Gastrocnemius medialis (tissue), 4 donors: ENCODE measurements at regions of chr6 and their contacts with region 1.

Region 1: DNA sequence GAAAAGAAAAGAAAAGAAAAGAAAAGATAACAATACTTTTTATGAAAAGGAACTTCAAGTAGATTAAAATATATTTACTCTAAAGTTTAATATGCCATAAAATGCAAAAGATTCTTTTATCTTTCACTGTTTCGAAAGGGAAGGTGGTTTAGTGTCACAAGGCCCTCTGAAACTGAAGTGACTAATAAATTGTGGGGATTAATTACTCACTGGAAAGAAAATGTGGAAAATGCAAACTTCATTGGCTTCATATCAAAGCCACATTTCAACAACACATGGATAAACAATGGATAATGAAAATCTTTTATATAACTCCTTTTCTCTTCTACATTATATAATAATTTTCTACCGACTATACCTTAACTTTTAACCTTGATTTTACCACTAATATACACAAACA is 320.5 kb upstream of the RSPO3 start:
- DNase-seq: no peak
- ATAC-seq: no peak
- H3K4me3 ChIP-seq: no peak overlapping the region
- H3K27ac ChIP-seq: no peak overlapping the region
- H3K4me1 ChIP-seq: no peaks in the 10 kb centered on the region
- H3K27me3 ChIP-seq: no peaks in the 10 kb centered on the region
- CTCF ChIP-seq: no peak
- POLR2A ChIP-seq: no peak

Region 2: GRCh38 chr6:126812651-126813050 is 14.7 kb after region 1 on chr6:
- in situ Hi-C with region 1: no loop called
- intact Hi-C with region 1: loop called (anchors 1 kb)
- DNase-seq: peak in 1 of 2 donors; percentile 21
- ATAC-seq: peak; percentile 84 to 94
- H3K4me3 ChIP-seq: no peak overlapping the region
- H3K27ac ChIP-seq: peak overlapping the region in 1 of 4 donors; percentile 27
- H3K4me1 ChIP-seq: peaks cover 8 to 9% of the 10 kb centered on the region in 2 donors
- H3K27me3 ChIP-seq: no peaks in the 10 kb centered on the region
- CTCF ChIP-seq: no peak
- POLR2A ChIP-seq: no peak